ENCODE measurements at regions of chr7 and their contacts with region 1.

Region 1: DNA sequence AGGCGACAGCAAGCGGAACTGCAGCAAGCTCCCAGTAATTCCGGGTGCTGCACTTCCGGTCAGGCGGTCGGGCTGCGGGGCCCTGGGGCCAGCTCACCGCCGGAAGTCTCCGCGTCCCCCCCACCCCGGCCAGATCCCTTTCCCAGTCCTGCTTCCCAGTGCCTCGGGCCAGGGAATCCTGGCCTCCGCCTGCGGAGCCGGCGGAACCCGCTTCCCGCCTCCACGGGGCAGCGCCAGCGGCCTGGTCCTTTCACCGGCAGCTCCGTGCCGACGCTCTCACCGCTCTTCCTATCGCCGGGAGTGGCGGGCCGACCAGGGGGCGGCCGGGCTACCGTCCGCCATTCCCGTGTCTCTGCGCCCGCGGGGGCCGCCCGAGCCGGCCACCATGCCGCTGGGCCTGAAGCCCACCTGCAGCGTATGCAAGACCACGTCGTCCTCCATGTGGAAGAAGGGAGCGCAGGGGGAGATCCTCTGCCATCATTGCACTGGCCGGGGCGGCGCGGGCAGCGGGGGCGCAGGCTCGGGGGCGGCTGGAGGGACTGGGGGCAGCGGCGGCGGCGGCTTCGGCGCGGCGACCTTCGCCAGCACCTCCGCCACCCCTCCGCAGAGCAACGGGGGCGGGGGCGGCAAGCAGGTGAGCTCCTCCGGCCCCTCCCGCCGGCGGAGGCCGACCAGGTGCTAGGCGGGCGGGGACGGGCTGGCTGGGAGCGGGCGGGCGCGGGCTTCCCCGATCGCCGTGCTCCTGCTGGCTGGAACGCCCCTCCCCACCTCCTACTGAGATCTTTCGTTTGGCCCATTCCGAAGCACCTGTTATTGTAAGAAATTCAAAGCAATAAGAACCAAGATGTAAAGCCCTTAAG is at the start of gene GATAD1:
- H3K4me3 Mint-ChIP-seq: peak within 1 kb of the TSS; percentile 88
- H3K27ac Mint-ChIP-seq: peak within 1 kb of the TSS; percentile 88
- H3K4me1 Mint-ChIP-seq: peaks cover 9% of the 10 kb centered on the region
- H3K27me3 Mint-ChIP-seq: no peaks in the 10 kb centered on the region

Region 2: GRCh38 chr7:91835846-91836368 is 611.7 kb before region 1 on chr7:
- intact Hi-C with region 1: loop called (anchors 5 kb)
- H3K4me3 Mint-ChIP-seq: no peak overlapping the region
- H3K27ac Mint-ChIP-seq: no peak overlapping the region
- H3K4me1 Mint-ChIP-seq: peaks cover 12% of the 10 kb centered on the region
- H3K27me3 Mint-ChIP-seq: no peaks in the 10 kb centered on the region

Region 3: GRCh38 chr7:92134271-92135051 is 313.1 kb before region 1 on chr7 and contains the start of gene CYP51A1:
- intact Hi-C with region 1: loop called (anchors 1 kb)
- H3K4me3 Mint-ChIP-seq: peak within 1 kb of the TSS; percentile 98
- H3K27ac Mint-ChIP-seq: peak within 1 kb of the TSS; percentile 99
- H3K4me1 Mint-ChIP-seq: peaks cover 34% of the 10 kb centered on the region
- H3K27me3 Mint-ChIP-seq: peaks cover 7% of the 10 kb centered on the region

Region 4: GRCh38 chr7:92245487-92246362 is 201.8 kb before region 1 on chr7 and contains the starts of genes ANKIB1 and KRIT1:
- intact Hi-C with region 1: loop called (anchors 1 kb)
- H3K4me3 Mint-ChIP-seq: peak within 1 kb of the TSS; percentile 87
- H3K27ac Mint-ChIP-seq: peak within 1 kb of the TSS; percentile 97
- H3K4me1 Mint-ChIP-seq: peaks cover 27% of the 10 kb centered on the region
- H3K27me3 Mint-ChIP-seq: no peaks in the 10 kb centered on the region

Region 5: DNA sequence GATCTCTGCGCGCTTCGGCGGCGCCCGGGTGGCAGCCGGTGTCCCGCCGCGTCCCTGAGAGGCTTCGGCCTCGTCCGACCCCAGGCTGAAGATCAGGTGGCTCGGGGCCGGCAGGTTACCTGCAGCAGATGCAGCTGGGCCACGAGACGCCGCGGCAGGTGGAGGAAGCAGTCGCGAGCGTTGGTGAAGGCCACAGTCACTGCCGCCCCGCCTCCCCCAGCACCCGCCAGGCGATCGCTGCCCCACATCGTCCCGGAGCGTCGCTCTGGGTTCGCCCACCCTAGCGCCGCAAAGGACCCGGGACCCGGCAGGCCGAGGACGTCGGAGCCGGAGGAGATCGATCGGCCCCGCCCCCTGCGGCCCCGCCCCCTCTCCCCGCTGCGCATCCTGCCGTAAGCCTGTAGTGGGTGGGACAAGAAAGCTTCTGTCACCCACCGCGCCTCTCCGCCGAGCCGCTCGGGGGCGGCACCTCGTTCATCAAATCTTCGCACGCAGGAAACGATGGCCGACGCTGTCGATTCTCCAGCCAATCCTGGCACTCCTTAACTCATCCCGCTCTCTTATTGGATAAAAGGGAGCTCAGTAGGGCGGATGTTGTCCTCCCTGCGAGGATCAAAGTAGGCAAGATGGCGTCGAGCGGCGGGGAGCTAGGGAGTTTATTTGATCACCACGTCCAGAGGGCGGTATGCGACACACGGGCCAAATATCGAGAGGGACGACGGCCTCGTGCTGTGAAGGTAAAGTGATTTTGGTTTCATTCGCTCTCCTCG is 80.8 kb after region 1 on chr7 and contains the starts of genes PEX1 and RBM48:
- intact Hi-C with region 1: loop called (anchors 5 kb)
- H3K4me3 Mint-ChIP-seq: peak within 1 kb of the TSS; percentile 88
- H3K27ac Mint-ChIP-seq: peak within 1 kb of the TSS; percentile 88
- H3K4me1 Mint-ChIP-seq: peaks cover 20% of the 10 kb centered on the region
- H3K27me3 Mint-ChIP-seq: no peaks in the 10 kb centered on the region